ENCODE measurements at regions of chrX and their contacts with region 1.

Region 1: DNA sequence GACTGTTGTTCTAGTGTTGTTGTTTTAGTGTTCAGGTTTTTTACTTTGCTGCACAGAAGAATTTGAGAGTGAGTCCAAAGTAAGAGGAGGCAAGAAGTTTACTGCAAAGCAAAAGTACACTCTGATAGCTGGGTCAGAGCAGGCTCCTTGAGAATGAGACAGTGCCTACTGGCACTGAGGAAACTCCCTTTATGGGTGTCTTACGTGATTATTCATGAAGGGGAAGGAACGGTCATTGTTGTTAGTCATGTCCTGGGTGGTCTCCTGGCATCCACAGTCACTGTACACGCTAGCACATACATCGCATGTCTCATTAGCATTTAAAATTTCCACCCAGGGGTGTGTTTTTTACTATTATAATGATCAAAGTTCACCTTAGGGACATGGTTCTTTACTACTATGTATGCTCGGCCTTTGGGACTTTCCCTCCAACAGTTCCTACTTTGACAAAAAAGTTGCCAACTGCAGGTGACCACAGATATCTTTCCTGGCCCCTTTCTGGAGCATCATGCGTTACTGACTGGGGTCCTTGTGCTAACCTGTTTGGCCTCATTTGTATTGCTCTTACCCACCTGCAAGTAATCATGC is 688.9 kb upstream of the AMOT start:
- DNase-seq: no peak
- ATAC-seq: no peak
- H3K4me3 Mint-ChIP-seq: no peak overlapping the region
- H3K27ac Mint-ChIP-seq: no peak overlapping the region
- H3K4me1 Mint-ChIP-seq: no peaks in the 10 kb centered on the region
- H3K27me3 Mint-ChIP-seq: no peaks in the 10 kb centered on the region
- CTCF ChIP-seq: no peak

Region 2: GRCh38 chrX:113305496-113305895 is 224.0 kb before region 1 on chrX:
- CTCF ChIA-PET with region 1: no interaction called
- POLR2A ChIA-PET with region 1: no interaction called
- intact Hi-C with region 1: no loop called
- DNase-seq: no peak
- ATAC-seq: no peak
- H3K4me3 Mint-ChIP-seq: no peak overlapping the region
- H3K27ac Mint-ChIP-seq: no peak overlapping the region
- H3K4me1 Mint-ChIP-seq: no peaks in the 10 kb centered on the region
- H3K27me3 Mint-ChIP-seq: no peaks in the 10 kb centered on the region
- CTCF ChIP-seq: no peak

Region 3: DNA sequence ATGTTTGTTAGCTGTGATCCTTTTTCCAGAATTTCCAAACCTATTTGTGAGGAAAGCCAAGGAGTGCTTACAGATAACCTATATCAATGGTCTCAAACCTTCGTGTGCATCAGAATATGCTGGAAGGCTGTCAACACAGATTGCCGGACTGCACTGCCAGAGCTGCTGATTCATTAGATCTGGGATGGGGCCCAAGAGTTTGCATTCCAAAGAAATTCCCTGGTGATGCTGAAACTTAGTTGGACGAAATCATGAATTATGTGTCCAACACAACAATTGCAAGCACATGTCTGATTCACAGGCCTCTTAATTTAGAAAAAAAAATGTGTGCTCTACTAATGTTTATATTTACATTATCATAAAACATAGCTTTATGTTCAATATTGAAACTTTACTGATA is 144.9 kb before region 1 on chrX:
- CTCF ChIA-PET with region 1: no interaction called
- POLR2A ChIA-PET with region 1: no interaction called
- intact Hi-C with region 1: no loop called
- DNase-seq: no peak
- ATAC-seq: no peak
- H3K4me3 Mint-ChIP-seq: no peak overlapping the region
- H3K27ac Mint-ChIP-seq: no peak overlapping the region
- H3K4me1 Mint-ChIP-seq: no peaks in the 10 kb centered on the region
- H3K27me3 Mint-ChIP-seq: no peaks in the 10 kb centered on the region
- CTCF ChIP-seq: no peak

Region 4: DNA sequence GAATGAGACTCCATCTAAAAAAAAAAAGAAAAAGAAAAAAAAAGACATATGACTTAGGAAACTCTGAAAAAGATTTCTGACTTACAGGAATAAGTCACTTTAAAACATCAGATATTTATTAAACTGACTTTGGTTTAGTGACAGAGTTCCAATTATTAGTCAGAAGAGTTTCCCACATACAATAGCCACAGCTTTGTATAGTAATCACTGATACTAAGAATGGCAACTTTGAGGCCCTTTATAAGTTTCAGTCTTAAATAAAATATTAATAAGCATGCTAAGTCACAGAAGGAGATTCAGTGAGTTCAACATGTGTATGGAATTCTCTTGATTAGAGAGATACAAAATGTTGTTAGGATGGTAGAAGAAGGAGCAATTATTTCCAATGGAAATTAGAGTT is 36.6 kb before region 1 on chrX:
- CTCF ChIA-PET with region 1: no interaction called
- POLR2A ChIA-PET with region 1: no interaction called
- intact Hi-C with region 1: loop called (anchors 2 kb)
- DNase-seq: no peak
- ATAC-seq: no peak
- H3K4me3 Mint-ChIP-seq: no peak overlapping the region
- H3K27ac Mint-ChIP-seq: no peak overlapping the region
- H3K4me1 Mint-ChIP-seq: no peaks in the 10 kb centered on the region
- H3K27me3 Mint-ChIP-seq: no peaks in the 10 kb centered on the region
- CTCF ChIP-seq: no peak